CD8-positive, alpha-beta T cell (primary cell): ENCODE measurements at regions of chr20 and their contacts with region 1.

Region 1: GRCh38 chr20:35303735-35304491 is 11.7 kb upstream of the FAM83C start:
- DNase-seq: peak; percentile 62 to 90 (median 82)
- ATAC-seq: peak; percentile 95
- H3K4me3 ChIP-seq: no peak overlapping the region
- H3K4me3 Mint-ChIP-seq: no peak overlapping the region
- H3K27ac ChIP-seq: no peak overlapping the region
- H3K27ac Mint-ChIP-seq: no peak overlapping the region
- H3K4me1 ChIP-seq: peaks cover 4% of the 10 kb centered on the region
- H3K4me1 Mint-ChIP-seq: peaks cover 4% of the 10 kb centered on the region
- H3K27me3 ChIP-seq: no peaks in the 10 kb centered on the region
- H3K27me3 Mint-ChIP-seq: no peaks in the 10 kb centered on the region
- CTCF ChIP-seq: peak; percentile 85

Region 2: DNA sequence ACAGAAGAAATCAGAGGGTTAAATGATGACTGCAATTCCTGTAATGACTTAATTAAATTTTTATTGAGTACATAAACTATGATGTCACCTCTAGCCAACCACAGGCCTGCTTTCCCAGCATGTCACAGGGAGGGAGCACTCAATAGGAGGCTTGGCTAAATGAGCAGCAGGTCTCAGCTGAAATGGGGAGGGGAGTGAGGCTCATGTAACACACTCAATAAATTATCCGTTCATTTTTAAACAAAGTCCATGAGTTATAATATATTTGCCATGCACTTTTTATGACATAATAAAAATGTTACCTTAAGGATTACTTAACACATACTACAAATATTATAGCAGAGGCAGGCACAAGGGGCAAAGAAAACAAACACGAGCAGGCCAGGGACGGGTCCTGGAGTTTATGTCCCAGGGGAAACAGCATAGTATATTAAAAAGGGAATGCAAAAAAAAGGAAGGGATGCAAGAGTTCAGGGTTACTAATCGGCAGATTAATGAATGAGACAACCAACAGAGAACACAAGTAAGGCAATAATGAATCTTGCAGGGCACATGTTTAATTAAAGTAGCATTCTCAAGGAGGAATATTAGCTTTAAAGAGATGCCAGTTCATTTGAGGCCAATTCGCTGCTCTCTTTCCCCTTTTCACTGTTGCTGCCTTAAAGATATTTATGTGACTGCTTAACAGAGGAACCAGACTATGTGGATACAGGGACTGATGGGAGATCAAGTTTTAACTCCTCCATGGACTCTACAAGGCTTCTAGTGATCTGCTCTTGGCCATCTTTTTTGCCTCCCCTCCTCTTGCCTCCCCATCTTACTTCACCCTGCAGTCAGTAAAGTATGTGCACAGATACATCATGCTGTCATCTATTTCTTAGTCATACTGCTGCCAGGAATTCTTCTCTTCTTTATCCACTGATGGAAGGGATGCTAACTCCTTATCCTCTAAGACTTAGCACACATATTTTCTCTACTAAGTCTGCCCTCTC is 15.6 kb after region 1 on chr20:
- CTCF ChIA-PET with region 1: interaction called, 12 read pairs
- POLR2A ChIA-PET with region 1: interaction called, 3 read pairs
- intact Hi-C with region 1: no loop called
- DNase-seq: no peak
- ATAC-seq: no peak
- H3K4me3 ChIP-seq: no peak overlapping the region
- H3K4me3 Mint-ChIP-seq: no peak overlapping the region
- H3K27ac ChIP-seq: no peak overlapping the region
- H3K27ac Mint-ChIP-seq: no peak overlapping the region
- H3K4me1 ChIP-seq: no peaks in the 10 kb centered on the region
- H3K4me1 Mint-ChIP-seq: peaks cover 13% of the 10 kb centered on the region
- H3K27me3 ChIP-seq: no peaks in the 10 kb centered on the region
- H3K27me3 Mint-ChIP-seq: no peaks in the 10 kb centered on the region
- CTCF ChIP-seq: no peak

Region 3: DNA sequence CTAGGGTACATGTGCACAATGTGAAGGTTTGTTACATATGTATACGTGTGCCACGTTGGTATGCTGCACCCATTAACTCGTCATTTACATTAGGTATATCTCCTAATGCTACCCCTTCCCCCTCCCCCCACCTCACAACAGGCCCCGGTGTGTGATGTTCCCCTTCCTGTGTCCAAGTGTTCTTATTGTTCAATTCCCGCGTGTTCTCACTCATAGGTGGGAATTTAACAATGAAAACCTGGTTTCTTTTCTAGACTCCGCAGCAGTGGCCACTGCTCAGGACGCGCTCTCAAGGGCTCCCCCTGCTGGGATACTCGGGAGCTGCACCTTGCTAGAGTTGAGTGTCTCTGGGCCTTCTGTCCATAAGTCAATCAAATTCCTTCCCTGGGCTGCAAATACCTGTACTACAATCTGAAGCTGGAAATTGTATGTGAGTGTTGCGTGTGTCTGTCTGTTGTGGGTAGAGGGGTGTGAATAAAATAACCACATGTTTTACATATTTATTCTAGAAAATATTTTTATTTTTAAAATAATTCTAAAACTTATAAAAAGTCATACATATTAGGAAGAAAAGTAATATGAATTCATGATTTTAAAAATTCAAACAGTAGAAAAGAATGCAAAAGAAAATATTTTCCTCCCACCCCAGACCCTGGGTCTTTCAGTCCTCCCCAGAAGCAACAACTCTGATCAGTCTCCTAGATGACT is 143.3 kb after region 1 on chr20:
- CTCF ChIA-PET with region 1: interaction called, 79 read pairs
- POLR2A ChIA-PET with region 1: no interaction called
- intact Hi-C with region 1: loop called (anchors 1 to 2 kb)
- DNase-seq: peak; percentile 82 to 95 (median 86)
- ATAC-seq: peak; percentile 100
- H3K4me3 ChIP-seq: peak overlapping the region in 1 of 2 experiments; percentile 31
- H3K4me3 Mint-ChIP-seq: peak overlapping the region; percentile 89
- H3K27ac ChIP-seq: no peak overlapping the region
- H3K27ac Mint-ChIP-seq: no peak overlapping the region
- H3K4me1 ChIP-seq: no peaks in the 10 kb centered on the region
- H3K4me1 Mint-ChIP-seq: peaks cover 3% of the 10 kb centered on the region
- H3K27me3 ChIP-seq: no peaks in the 10 kb centered on the region
- H3K27me3 Mint-ChIP-seq: peaks cover 5% of the 10 kb centered on the region
- CTCF ChIP-seq: peak; percentile 87

Region 4: DNA sequence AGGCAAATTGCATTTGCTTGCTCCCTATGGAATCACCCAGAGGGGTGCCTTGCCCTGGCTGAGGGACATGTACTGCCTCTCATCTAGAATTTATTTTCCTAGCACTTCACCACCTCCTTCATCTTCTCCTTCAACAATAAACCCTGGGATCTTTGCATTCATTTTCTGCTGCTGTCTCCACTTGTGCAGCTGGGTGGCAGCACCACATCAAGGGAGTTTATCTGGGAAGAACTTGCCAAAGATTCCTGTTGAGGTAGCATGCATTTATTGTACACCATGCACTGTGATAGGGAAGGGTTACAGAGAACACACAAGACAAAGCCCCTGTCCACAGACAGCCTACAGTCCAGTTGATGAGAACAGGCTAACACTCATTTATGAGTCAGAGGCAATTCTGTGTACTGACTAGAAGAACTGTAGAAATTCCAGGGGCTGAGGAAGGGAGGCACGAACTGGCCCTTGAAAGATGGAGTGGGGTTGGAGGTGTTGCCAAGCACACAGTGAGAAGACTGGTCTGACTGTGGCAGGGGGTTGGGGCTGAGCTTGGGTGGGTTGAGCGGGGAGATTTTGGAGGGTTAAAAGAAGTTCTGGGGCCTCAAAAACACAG is 208.0 kb after region 1 on chr20:
- CTCF ChIA-PET with region 1: no interaction called
- POLR2A ChIA-PET with region 1: no interaction called
- intact Hi-C with region 1: no loop called
- DNase-seq: peak in 1 of 9 experiments; percentile 23
- ATAC-seq: no peak
- H3K4me3 ChIP-seq: no peak overlapping the region
- H3K4me3 Mint-ChIP-seq: no peak overlapping the region
- H3K27ac ChIP-seq: no peak overlapping the region
- H3K27ac Mint-ChIP-seq: no peak overlapping the region
- H3K4me1 ChIP-seq: no peaks in the 10 kb centered on the region
- H3K4me1 Mint-ChIP-seq: peaks cover 3% of the 10 kb centered on the region
- H3K27me3 ChIP-seq: no peaks in the 10 kb centered on the region
- H3K27me3 Mint-ChIP-seq: no peaks in the 10 kb centered on the region
- CTCF ChIP-seq: no peak